Caco-2 (cell line): ENCODE measurements at regions of chr11 and their contacts with region 1.

Region 1: GRCh38 chr11:83819933-83820549 is 533.9 kb upstream of the CCDC90B start:
- DNase-seq: peak in 1 of 2 experiments; percentile 53
- H3K4me3 ChIP-seq: no peak overlapping the region
- H3K4me3 Mint-ChIP-seq: no peak overlapping the region
- H3K27ac Mint-ChIP-seq: no peak overlapping the region
- H3K4me1 ChIP-seq: no peaks in the 10 kb centered on the region
- H3K4me1 Mint-ChIP-seq: no peaks in the 10 kb centered on the region
- H3K27me3 ChIP-seq: no peaks in the 10 kb centered on the region
- H3K27me3 Mint-ChIP-seq: peaks cover 5% of the 10 kb centered on the region
- CTCF ChIP-seq: peak; percentile 67 to 80

Region 2: GRCh38 chr11:82867495-82868082 is 952.5 kb before region 1 on chr11:
- CTCF ChIA-PET with region 1: interaction called, 3 read pairs
- POLR2A ChIA-PET with region 1: no interaction called
- intact Hi-C with region 1: loop called (anchors 1 kb)
- DNase-seq: peak; percentile 84 to 89
- H3K4me3 ChIP-seq: no peak overlapping the region
- H3K4me3 Mint-ChIP-seq: no peak overlapping the region
- H3K27ac Mint-ChIP-seq: no peak overlapping the region
- H3K4me1 ChIP-seq: no peaks in the 10 kb centered on the region
- H3K4me1 Mint-ChIP-seq: no peaks in the 10 kb centered on the region
- H3K27me3 ChIP-seq: no peaks in the 10 kb centered on the region
- H3K27me3 Mint-ChIP-seq: no peaks in the 10 kb centered on the region
- CTCF ChIP-seq: peak; percentile 75 to 95

Region 3: GRCh38 chr11:83087035-83087434 is 733.0 kb before region 1 on chr11:
- CTCF ChIA-PET with region 1: no interaction called
- POLR2A ChIA-PET with region 1: no interaction called
- intact Hi-C with region 1: loop called (anchors 5 kb)
- DNase-seq: peak in 1 of 2 experiments; percentile 28
- H3K4me3 ChIP-seq: no peak overlapping the region
- H3K4me3 Mint-ChIP-seq: no peak overlapping the region
- H3K27ac Mint-ChIP-seq: no peak overlapping the region
- H3K4me1 ChIP-seq: peaks cover 13% of the 10 kb centered on the region
- H3K4me1 Mint-ChIP-seq: peaks cover 48% of the 10 kb centered on the region
- H3K27me3 ChIP-seq: no peaks in the 10 kb centered on the region
- H3K27me3 Mint-ChIP-seq: no peaks in the 10 kb centered on the region
- CTCF ChIP-seq: peak; percentile 51 to 61

Region 4: DNA sequence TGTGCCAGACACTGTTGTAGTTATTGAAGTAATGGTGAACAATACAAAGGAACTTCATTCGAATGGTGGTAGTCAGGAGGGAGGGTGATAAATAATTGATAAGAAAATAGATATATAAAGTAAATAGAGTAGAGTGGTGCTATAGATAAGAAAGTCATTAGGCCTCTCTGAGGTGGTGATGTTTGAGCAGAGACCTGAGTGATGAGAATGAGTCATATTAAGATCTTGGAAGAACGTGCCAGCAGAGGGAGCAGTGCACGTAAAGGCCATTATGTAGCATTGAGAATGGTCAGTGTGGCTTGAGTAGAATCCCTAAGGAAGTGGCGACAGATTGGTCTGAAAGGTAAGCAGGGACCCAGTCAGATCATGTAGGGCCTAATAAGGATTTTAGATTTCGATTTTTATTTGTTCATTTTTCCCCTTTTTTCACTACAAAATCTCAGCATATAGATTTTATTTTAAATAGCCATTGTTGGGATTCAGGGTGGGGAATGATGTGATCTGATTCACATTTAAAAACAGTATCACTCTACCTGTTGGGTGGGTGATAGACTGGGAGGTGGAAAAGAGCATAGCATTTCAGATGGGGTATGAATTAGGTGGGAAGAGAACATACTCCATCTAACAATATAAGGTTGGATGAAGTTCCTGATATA is 578.6 kb before region 1 on chr11:
- CTCF ChIA-PET with region 1: no interaction called
- POLR2A ChIA-PET with region 1: no interaction called
- intact Hi-C with region 1: loop called (anchors 1 kb)
- DNase-seq: peak; percentile 86
- H3K4me3 ChIP-seq: no peak overlapping the region
- H3K4me3 Mint-ChIP-seq: no peak overlapping the region
- H3K27ac Mint-ChIP-seq: no peak overlapping the region
- H3K4me1 ChIP-seq: peaks cover 9% of the 10 kb centered on the region
- H3K4me1 Mint-ChIP-seq: peaks cover 21% of the 10 kb centered on the region
- H3K27me3 ChIP-seq: no peaks in the 10 kb centered on the region
- H3K27me3 Mint-ChIP-seq: no peaks in the 10 kb centered on the region
- CTCF ChIP-seq: peak; percentile 86 to 92

Region 5: DNA sequence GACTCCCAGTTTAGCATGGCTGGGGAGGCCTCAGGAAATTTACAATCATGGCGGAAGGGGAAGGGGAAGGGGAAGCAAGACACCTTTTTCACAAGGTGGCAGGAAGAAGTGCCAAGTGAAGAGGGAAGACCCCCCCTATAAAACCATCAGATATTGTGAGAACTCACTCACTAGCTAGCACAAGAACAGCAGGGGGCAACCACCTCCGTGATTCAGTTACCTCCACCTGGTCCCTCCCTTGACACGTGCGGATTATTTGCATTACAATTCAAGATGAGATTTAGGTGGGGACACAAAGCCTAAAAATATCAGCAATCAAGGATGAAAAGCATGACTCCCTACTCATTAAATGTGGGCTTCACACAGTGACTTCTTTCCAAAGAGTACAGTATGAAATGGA is 378.9 kb before region 1 on chr11:
- CTCF ChIA-PET with region 1: no interaction called
- POLR2A ChIA-PET with region 1: no interaction called
- intact Hi-C with region 1: loop called (anchors 5 kb)
- DNase-seq: no peak
- H3K4me3 ChIP-seq: no peak overlapping the region
- H3K4me3 Mint-ChIP-seq: no peak overlapping the region
- H3K27ac Mint-ChIP-seq: no peak overlapping the region
- H3K4me1 ChIP-seq: no peaks in the 10 kb centered on the region
- H3K4me1 Mint-ChIP-seq: no peaks in the 10 kb centered on the region
- H3K27me3 ChIP-seq: no peaks in the 10 kb centered on the region
- H3K27me3 Mint-ChIP-seq: no peaks in the 10 kb centered on the region
- CTCF ChIP-seq: peak; percentile 19 to 36

Region 6: DNA sequence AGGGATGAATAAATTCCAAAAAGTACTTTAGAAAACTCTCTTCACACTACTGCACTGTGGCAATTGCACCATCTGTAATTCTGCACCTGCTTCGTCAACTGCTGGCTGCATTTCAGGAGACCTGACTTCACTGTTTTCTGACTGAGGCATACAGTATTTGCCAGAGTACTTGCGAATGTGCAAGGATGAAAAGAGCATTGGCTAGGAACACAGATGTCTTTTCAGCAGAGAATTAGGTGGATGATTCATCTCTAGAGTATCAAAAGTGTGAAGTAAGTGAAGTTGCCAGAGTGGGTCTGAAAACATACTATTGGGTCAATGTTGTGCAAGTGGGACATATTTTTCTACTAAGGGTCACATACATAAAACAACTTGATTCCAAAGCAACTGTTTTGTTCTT is 106.3 kb before region 1 on chr11:
- CTCF ChIA-PET with region 1: no interaction called
- POLR2A ChIA-PET with region 1: no interaction called
- intact Hi-C with region 1: loop called (anchors 1 kb)
- DNase-seq: no peak
- H3K4me3 ChIP-seq: no peak overlapping the region
- H3K4me3 Mint-ChIP-seq: no peak overlapping the region
- H3K27ac Mint-ChIP-seq: peak overlapping the region; percentile 69
- H3K4me1 ChIP-seq: peaks cover 62% of the 10 kb centered on the region
- H3K4me1 Mint-ChIP-seq: peaks cover 64% of the 10 kb centered on the region
- H3K27me3 ChIP-seq: no peaks in the 10 kb centered on the region
- H3K27me3 Mint-ChIP-seq: no peaks in the 10 kb centered on the region
- CTCF ChIP-seq: no peak

Region 7: DNA sequence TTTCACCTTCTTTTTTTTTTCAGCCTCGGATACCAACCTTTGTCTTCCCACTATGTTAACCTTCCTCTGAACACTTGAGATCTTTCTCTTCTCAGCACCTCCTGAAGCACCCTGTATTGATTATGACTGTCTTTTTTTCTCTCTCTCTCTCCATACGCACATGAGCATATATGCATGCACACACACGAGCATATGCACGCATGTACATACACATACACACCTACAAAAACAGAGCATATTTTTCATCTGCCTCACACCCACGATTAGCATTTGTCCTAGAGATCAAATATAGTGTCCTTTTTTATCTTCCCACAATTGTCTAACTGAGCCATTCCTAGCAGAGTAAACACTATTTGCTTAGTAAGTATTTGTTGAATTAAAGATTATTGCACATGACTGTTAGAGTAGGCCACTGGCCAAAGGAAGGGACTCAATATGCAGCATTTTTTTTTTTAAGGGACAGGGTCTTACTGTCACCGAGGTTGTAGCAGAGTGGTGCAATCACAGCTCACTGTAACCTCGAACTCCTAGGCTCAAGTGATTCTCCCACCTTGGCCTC is 88.3 kb after region 1 on chr11:
- CTCF ChIA-PET with region 1: no interaction called
- POLR2A ChIA-PET with region 1: no interaction called
- intact Hi-C with region 1: no loop called
- DNase-seq: no peak
- H3K4me3 ChIP-seq: no peak overlapping the region
- H3K4me3 Mint-ChIP-seq: no peak overlapping the region
- H3K27ac Mint-ChIP-seq: no peak overlapping the region
- H3K4me1 ChIP-seq: peaks cover 8% of the 10 kb centered on the region; the same call in 1 of the 2 replicates
- H3K4me1 Mint-ChIP-seq: no peaks in the 10 kb centered on the region
- H3K27me3 ChIP-seq: no peaks in the 10 kb centered on the region
- H3K27me3 Mint-ChIP-seq: no peaks in the 10 kb centered on the region
- CTCF ChIP-seq: no peak